Dorsolateral prefrontal cortex (tissue), 120 donors: ENCODE measurements at regions of chr3 and their contacts with region 1.

Region 1: DNA sequence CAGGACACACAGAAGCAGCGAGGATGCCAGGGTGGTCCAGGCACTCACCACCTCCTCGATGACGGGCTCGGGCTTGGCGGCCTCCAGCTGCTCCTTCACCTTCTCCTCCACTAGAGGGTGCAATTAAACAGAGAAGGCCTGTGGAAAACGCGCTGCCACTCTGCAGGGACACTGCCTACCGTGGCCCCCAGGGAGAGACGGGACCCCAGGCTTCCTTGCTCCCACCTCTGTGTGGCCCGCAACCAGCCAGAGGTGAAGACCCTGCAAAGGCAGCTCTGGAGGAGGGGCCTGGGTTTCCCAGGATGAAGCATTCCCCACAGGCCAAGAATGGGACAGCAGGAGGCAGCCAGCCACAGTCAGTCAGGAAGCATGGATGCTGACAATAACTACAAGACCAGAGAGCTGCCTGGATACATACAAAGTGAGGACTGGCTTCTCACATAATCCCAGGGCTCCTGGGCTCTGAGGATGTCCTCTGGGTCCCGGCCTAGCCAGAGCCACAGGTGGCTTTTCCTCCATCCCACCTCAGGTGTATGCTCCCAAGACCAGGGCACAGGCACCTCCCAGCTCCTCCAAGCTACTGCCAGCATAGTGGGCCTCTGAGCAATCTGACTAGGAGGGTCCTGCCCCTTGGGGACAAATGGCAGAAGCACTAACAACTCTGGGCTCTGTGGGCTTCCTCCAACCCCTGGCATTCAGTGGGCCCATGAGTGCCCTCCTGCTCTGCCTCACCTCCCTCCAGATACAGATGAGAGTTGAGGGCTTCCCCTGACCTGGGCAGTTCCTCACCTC is 46.2 kb downstream of the PTH1R start:
- DNase-seq: peak in 5 of 10 donors; percentile 22 to 59 (median 42)
- H3K4me3 ChIP-seq: no peak overlapping the region
- H3K27ac ChIP-seq: peak overlapping the region in 1 of 59 donors; percentile 22
- H3K27me3 ChIP-seq: no peaks in the 10 kb centered on the region
- CTCF ChIP-seq: peak in 55 of 56 donors; percentile 22 to 80 (median 70)

Region 2: GRCh38 chr3:46998121-46998851 is 74.5 kb after region 1 on chr3:
- intact Hi-C with region 1: loop called (anchors 2 to 5 kb)
- DNase-seq: peak in 4 of 10 donors; percentile 33 to 65 (median 52)
- H3K4me3 ChIP-seq: no peak overlapping the region
- H3K27ac ChIP-seq: no peak overlapping the region
- H3K27me3 ChIP-seq: no peaks in the 10 kb centered on the region
- CTCF ChIP-seq: peak in 55 of 56 donors; percentile 32 to 77 (median 64)